ENCODE measurements at regions of chr7 and their contacts with region 1.

Region 1: DNA sequence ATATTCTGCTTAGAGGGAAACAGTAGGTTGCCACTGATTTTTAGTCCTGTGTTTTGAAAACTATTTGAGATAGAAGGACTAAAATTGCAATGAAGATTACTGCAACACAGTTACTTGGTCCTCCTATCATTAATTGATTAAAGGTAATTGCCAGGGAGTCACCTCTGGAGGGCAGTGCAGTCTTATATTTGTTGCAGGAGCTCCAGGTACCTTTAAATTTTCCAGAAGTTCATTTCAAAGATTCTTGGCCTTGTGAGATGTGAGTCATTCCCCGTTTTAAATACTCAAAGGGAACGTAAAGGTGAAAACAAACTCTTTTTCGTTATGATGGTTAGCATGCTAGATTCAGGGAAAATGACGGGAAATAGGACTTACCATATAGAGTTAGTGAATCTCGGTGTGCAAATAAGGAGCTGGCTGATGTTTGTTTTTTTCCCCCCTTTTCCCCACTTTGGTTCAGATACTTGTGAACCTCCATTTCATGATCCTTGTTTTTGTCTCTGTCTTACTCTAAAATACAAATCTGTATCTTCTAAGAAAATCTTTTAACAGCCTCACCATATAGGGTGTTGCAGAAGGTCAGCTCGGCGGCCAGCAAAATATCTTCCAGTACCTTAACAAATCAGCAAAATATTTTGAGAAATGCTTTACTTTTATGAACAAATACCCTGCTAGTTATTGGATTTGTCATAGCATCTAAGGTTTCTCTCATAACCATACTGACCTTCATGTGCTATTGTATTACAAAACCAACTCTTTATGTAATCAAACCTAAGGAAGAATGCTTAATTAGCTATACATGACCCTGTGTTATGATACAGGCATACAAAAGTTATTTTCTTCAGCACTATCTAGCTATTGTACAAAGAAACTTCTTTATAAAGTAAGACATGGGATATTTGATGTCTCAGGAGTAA is 143.0 kb upstream of the HDAC9 start:
- DNase-seq: peak; percentile 81
- H3K4me3 Mint-ChIP-seq: peak overlapping the region; percentile 67
- H3K27ac Mint-ChIP-seq: peak overlapping the region; percentile 91
- H3K4me1 Mint-ChIP-seq: peaks cover 60% of the 10 kb centered on the region
- H3K27me3 Mint-ChIP-seq: no peaks in the 10 kb centered on the region
- CTCF ChIP-seq: peak; percentile 71

Region 2: DNA sequence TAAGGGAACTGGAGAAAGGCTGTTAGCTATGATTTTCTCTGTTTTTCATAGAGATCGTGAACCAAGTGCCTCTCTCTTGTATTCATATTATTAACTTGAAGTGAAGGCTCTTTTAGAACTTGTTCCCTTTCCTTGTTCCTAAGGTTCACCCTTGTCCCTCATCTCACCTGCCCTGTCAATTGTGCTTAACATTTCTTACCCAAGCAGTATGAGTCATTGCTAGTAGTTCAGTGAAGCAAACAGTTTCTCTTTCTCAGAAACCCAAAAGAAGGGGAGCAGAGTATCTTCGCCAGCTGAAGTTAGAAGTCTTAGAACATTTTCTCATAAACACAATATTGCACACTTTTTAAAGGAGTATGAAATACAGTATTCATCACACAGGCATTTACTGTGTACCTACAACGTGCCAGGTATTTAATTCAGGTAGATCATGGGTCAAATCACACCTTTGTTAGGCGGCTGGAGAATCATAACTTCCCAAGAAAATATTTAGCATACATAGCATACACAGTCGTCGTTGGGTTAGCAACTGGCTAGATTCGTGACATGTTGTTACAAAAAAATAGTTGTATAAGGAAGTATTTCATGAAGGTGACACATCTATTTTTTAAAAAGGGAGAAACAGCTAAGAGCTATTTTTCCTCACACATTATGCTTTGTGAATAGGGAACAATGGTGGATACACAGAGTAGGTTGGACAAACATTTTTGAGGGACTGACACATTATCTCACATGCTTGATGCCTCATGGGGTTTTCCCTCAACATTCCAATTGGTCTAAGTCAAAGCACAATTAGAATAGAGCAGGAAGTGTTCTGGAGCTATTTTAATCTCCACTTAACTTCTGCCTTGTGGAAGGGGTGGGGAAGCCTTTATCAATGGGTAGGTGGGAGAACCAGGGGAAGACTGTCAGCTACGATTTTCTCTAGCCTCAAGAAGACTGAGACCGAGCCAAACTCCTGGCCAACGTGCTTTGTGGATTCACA is 156.1 kb after region 1 on chr7:
- CTCF ChIA-PET with region 1: interaction called, 18 read pairs
- intact Hi-C with region 1: loop called (anchors 2 kb)
- DNase-seq: peak; percentile 83
- H3K4me3 Mint-ChIP-seq: peak overlapping the region; percentile 74
- H3K27ac Mint-ChIP-seq: peak overlapping the region; percentile 98
- H3K4me1 Mint-ChIP-seq: peaks cover 57% of the 10 kb centered on the region
- H3K27me3 Mint-ChIP-seq: no peaks in the 10 kb centered on the region
- CTCF ChIP-seq: no peak

Region 3: GRCh38 chr7:18610331-18610948 is 257.8 kb after region 1 on chr7:
- CTCF ChIA-PET with region 1: interaction called, 8 read pairs
- intact Hi-C with region 1: loop called (anchors 1 kb)
- DNase-seq: peak; percentile 60
- H3K4me3 Mint-ChIP-seq: no peak overlapping the region
- H3K27ac Mint-ChIP-seq: no peak overlapping the region
- H3K4me1 Mint-ChIP-seq: peaks cover 8% of the 10 kb centered on the region
- H3K27me3 Mint-ChIP-seq: no peaks in the 10 kb centered on the region
- CTCF ChIP-seq: peak; percentile 76

Region 4: DNA sequence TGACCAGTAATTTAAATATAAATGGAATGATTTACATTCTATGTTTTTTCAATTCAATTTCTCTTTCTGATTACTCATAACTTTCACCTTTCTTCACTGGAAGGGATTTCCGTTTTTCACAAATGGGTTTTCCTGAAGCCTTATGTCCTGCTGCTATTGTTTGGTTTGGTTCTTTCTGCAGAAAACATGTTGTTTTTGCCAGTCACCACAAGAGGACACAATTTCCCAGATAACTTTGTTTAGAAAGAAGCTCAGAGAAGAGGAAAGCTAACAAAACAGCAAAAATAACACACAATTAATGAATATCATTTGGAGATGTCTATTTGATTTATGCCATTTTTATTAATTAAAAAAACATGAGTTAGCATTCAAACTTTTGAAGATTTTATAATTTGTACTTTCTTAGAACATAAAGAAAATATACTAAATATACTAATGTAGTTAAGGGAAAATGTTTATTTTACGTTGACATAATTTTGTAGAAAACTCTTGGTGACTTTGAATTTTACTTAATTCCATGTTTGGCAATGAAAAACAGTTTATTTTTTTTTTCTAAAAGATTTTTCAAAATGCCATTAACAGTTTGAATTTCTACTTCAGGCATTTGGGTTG is 769.5 kb after region 1 on chr7:
- CTCF ChIA-PET with region 1: interaction called, 5 read pairs
- intact Hi-C with region 1: loop called (anchors 5 kb)
- DNase-seq: no peak
- H3K4me3 Mint-ChIP-seq: no peak overlapping the region
- H3K27ac Mint-ChIP-seq: no peak overlapping the region
- H3K4me1 Mint-ChIP-seq: no peaks in the 10 kb centered on the region
- H3K27me3 Mint-ChIP-seq: peaks cover 57% of the 10 kb centered on the region
- CTCF ChIP-seq: peak; percentile 60

Region 5: GRCh38 chr7:19665399-19666008 is 1312.9 kb after region 1 on chr7:
- CTCF ChIA-PET with region 1: no interaction called
- intact Hi-C with region 1: loop called (anchors 2 kb)
- DNase-seq: no peak
- H3K4me3 Mint-ChIP-seq: no peak overlapping the region
- H3K27ac Mint-ChIP-seq: no peak overlapping the region
- H3K4me1 Mint-ChIP-seq: peaks cover 20% of the 10 kb centered on the region
- H3K27me3 Mint-ChIP-seq: no peaks in the 10 kb centered on the region
- CTCF ChIP-seq: peak; percentile 53